Common myeloid progenitor, CD34-positive (primary cell): ENCODE measurements at regions of chr1 and their contacts with region 1.

Region 1: GRCh38 chr1:2300851-2301606 is 72.9 kb downstream of the SKI start:
- DNase-seq: peak; percentile 99 to 100 (median 100)
- H3K4me3 ChIP-seq: peak overlapping the region in 6 of 7 experiments; percentile 19 to 68 (median 59)
- H3K27ac ChIP-seq: peak overlapping the region; percentile 93 to 95
- H3K4me1 ChIP-seq: peaks cover 0 to 82% (median 56%) of the 10 kb centered on the region in 4 experiments
- H3K27me3 ChIP-seq: no peaks in the 10 kb centered on the region

Region 2: GRCh38 chr1:2279210-2279639 is 21.8 kb before region 1 on chr1:
- CTCF ChIA-PET with region 1: interaction called, 3 read pairs
- POLR2A ChIA-PET with region 1: interaction called, 21 read pairs
- DNase-seq: peak; percentile 82 to 93 (median 92)
- H3K4me3 ChIP-seq: peak overlapping the region in 6 of 7 experiments; percentile 3 to 62 (median 29)
- H3K27ac ChIP-seq: peak overlapping the region; percentile 25 to 54
- H3K4me1 ChIP-seq: peaks cover 0 to 57% (median 53%) of the 10 kb centered on the region in 4 experiments
- H3K27me3 ChIP-seq: no peaks in the 10 kb centered on the region

Region 3: GRCh38 chr1:2314803-2315673 is 14.0 kb after region 1 on chr1:
- CTCF ChIA-PET with region 1: interaction called, 15 read pairs
- POLR2A ChIA-PET with region 1: interaction called, 95 read pairs
- DNase-seq: peak; percentile 62 to 81 (median 74)
- H3K4me3 ChIP-seq: peak overlapping the region; percentile 0 to 76 (median 40)
- H3K27ac ChIP-seq: peak overlapping the region; percentile 40 to 68
- H3K4me1 ChIP-seq: peaks cover 0 to 59% (median 55%) of the 10 kb centered on the region in 4 experiments
- H3K27me3 ChIP-seq: no peaks in the 10 kb centered on the region

Region 4: GRCh38 chr1:2360588-2361364 is 59.7 kb after region 1 on chr1:
- CTCF ChIA-PET with region 1: no interaction called
- POLR2A ChIA-PET with region 1: no interaction called
- DNase-seq: no peak
- H3K4me3 ChIP-seq: no peak overlapping the region
- H3K27ac ChIP-seq: no peak overlapping the region
- H3K4me1 ChIP-seq: no peaks in the 10 kb centered on the region
- H3K27me3 ChIP-seq: no peaks in the 10 kb centered on the region

Region 5: DNA sequence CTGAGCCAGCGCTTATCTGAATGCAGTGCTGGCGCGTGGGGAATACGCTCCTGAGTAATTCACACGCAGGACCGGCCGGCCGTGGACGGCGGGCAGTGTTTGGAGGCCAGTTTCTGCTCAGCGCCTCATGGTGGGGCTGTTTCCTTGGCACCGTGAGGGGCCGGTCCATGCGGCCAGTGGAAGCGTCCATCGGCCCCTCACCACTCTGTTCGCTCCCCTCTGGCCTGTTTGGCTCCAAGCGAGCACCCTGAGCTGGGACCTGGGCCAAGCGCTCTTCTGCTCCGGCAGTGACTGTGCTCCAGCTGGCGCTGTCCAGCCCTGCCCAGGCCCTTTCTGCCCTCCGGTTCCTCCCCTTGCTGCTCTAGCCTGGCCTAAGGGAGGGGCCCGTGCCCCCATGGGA is 158.7 kb after region 1 on chr1:
- CTCF ChIA-PET with region 1: no interaction called
- POLR2A ChIA-PET with region 1: no interaction called
- DNase-seq: no peak
- H3K4me3 ChIP-seq: no peak overlapping the region
- H3K27ac ChIP-seq: no peak overlapping the region
- H3K4me1 ChIP-seq: no peaks in the 10 kb centered on the region
- H3K27me3 ChIP-seq: peaks cover 0 to 45% (median 4%) of the 10 kb centered on the region in 5 experiments